Right cardiac atrium (tissue), 5 donors: ENCODE measurements at regions of chr15 and their contacts with region 1.

Region 1: GRCh38 chr15:44971036-44971435 is 14.5 kb downstream of the TERB2 start:
- DNase-seq: no peak
- ATAC-seq: no peak
- H3K4me3 ChIP-seq: no peak overlapping the region
- H3K27ac ChIP-seq: no peak overlapping the region
- H3K4me1 ChIP-seq: no peaks in the 10 kb centered on the region
- H3K27me3 ChIP-seq: no peaks in the 10 kb centered on the region

Region 2: DNA sequence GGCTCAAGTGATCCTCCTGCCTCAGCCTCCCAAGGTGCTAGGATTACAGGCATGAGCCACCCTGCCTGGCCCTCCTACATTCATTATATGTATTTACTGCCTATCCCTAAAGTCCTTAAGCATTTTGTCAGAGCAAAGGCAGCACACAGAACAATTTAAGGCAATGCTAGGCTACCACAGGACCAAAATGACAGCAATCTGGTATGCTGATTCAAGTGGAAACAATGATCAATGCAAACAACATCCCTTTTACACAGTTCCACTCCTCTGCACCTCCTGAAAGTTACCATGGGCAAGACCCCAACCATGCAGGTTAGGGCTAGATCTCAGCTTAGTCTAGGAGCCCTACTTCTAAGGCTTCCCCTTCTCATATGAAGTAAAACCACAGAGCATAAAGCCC is 347.9 kb before region 1 on chr15:
- intact Hi-C with region 1: no loop called
- DNase-seq: no peak
- ATAC-seq: no peak
- H3K4me3 ChIP-seq: no peak overlapping the region
- H3K27ac ChIP-seq: no peak overlapping the region
- H3K4me1 ChIP-seq: no peaks in the 10 kb centered on the region
- H3K27me3 ChIP-seq: no peaks in the 10 kb centered on the region

Region 3: GRCh38 chr15:44882499-44882968 is 88.5 kb before region 1 on chr15:
- intact Hi-C with region 1: no loop called
- DNase-seq: no peak
- ATAC-seq: no peak
- H3K4me3 ChIP-seq: no peak overlapping the region
- H3K27ac ChIP-seq: no peak overlapping the region
- H3K4me1 ChIP-seq: no peaks in the 10 kb centered on the region
- H3K27me3 ChIP-seq: no peaks in the 10 kb centered on the region

Region 4: GRCh38 chr15:45022871-45023658 is 52.0 kb after region 1 on chr15 and contains the start of gene SORD:
- intact Hi-C with region 1: loop called in 1 of 4 experiments (anchors 10 kb)
- DNase-seq: peak; percentile 96 to 98 (median 98)
- ATAC-seq: peak; percentile 100
- H3K4me3 ChIP-seq: peak within 1 kb of the TSS; percentile 61
- H3K27ac ChIP-seq: peak within 1 kb of the TSS; percentile 4
- H3K4me1 ChIP-seq: peaks cover 3% of the 10 kb centered on the region
- H3K27me3 ChIP-seq: no peaks in the 10 kb centered on the region
- total RNA-seq, gene SORD: 11.0 to 14.7 (median 12.9) TPM

Region 5: GRCh38 chr15:45037936-45038335 is 66.9 kb after region 1 on chr15:
- intact Hi-C with region 1: loop called in 1 of 4 experiments (anchors 5 kb)
- DNase-seq: no peak
- ATAC-seq: no peak
- H3K4me3 ChIP-seq: no peak overlapping the region
- H3K27ac ChIP-seq: no peak overlapping the region
- H3K4me1 ChIP-seq: no peaks in the 10 kb centered on the region
- H3K27me3 ChIP-seq: no peaks in the 10 kb centered on the region

Region 6: GRCh38 chr15:45118131-45118588 is 147.1 kb after region 1 on chr15:
- intact Hi-C with region 1: loop called in 1 of 4 experiments (anchors 10 kb)
- DNase-seq: peak; percentile 87 to 94 (median 90)
- ATAC-seq: peak; percentile 94 to 96
- H3K4me3 ChIP-seq: no peak overlapping the region
- H3K27ac ChIP-seq: no peak overlapping the region
- H3K4me1 ChIP-seq: no peaks in the 10 kb centered on the region
- H3K27me3 ChIP-seq: no peaks in the 10 kb centered on the region

Region 7: DNA sequence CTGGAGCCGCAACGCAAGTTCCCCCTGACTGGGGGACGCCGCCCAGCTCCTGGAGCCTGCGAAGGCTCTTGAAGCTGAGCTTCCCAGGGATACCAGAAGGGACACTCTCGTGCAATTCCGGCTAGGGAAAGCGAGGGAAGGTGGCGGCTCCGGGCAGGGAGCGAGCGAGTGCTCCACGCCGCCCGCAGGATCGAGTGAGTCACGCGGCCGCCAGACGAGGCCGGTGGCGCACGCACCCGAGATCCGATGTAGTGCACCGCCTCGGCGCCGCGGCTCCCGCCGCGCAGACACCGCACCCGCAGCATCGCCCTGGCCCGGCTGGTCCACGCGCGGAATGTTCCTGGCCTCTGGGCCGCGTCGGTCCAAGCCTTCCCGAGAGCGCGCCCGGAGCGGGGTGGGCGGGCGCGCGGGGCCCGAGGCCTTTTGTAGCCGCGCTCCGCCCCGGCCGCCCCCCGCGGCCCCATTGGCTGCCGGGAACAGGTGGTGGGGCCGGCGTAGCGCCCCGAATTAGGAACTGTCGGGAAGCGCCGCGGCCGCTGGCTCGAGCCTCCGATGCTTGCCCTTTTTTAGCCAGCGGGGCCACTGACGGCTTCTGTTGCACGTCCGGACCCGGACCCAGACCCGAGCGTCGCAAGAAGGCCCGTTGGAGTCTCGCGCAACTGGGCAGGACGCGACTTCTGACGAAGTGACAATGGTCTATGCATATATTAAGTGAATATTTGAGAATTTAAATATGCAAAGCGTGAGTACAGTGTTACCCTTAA is 407.3 kb after region 1 on chr15 and contains the start of gene GATM:
- intact Hi-C with region 1: no loop called
- DNase-seq: peak; percentile 84 to 94 (median 94)
- ATAC-seq: peak; percentile 97 to 98
- H3K4me3 ChIP-seq: peak within 1 kb of the TSS; percentile 58
- H3K27ac ChIP-seq: peak within 1 kb of the TSS; percentile 69
- H3K4me1 ChIP-seq: peaks cover 2% of the 10 kb centered on the region
- H3K27me3 ChIP-seq: no peaks in the 10 kb centered on the region
- total RNA-seq, gene GATM: 22.2 to 33.8 (median 31.2) TPM